ENCODE measurements at regions of chr6 and their contacts with region 1.

Region 1: GRCh38 chr6:112043032-112044007 is 10.6 kb upstream of the CCN6 start:
- DNase-seq: peak; percentile 82 to 93 (median 90)
- ATAC-seq: peak; percentile 95
- H3K4me3 ChIP-seq: peak overlapping the region; percentile 92
- H3K4me3 Mint-ChIP-seq: peak overlapping the region; percentile 92 to 99 (median 98)
- H3K27ac ChIP-seq: peak overlapping the region; percentile 91
- H3K27ac Mint-ChIP-seq: peak overlapping the region; percentile 96 to 100 (median 99)
- H3K4me1 ChIP-seq: peaks cover 5 to 24% of the 10 kb centered on the region in 2 donors
- H3K4me1 Mint-ChIP-seq: peaks cover 10 to 51% (median 35%) of the 10 kb centered on the region in 7 donors
- H3K27me3 ChIP-seq: no peaks in the 10 kb centered on the region
- H3K27me3 Mint-ChIP-seq: no peaks in the 10 kb centered on the region

Region 2: DNA sequence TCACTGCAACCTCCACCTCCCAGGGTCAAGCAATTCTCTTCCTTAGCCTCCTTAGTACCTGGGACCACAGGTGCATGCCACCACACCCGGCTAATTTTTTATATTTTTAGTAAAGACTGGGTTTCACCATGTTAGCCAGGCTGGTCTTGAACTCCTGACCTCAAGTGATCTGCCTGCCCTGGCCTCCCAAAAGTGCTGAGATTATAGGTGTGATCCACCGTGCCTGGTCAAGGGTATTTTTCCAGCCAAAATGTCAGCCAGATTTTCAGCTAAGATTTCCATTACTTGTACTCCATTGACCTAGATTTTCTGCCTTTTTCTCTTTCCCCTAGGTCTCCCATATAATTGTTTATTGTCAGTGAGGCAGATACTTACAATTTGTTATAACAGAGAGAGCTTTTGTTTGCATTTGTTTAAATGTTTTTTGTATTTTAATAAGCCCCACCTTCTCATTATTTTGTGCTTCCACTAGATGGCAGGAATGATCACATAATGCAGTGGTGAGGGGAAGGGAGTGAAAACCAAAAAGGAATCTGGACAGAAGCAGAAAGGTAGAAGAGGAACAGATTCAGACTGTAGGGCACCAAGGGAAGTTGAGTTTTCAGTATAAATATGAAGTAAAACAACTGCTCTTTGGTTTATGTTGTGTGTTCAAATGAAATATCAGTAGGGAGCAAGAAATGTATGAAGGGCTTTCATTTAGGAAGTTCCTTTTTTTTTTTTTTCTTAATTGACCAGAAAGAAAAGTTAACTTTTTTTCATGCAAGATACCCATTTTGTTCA is 1031.8 kb before region 1 on chr6:
- CTCF ChIA-PET with region 1: no interaction called
- POLR2A ChIA-PET with region 1: no interaction called
- intact Hi-C with region 1: loop called in 1 of 2 experiments (anchors 1 kb)
- DNase-seq: peak in 7 of 9 donors; percentile 18 to 58 (median 50)
- ATAC-seq: peak; percentile 71
- H3K4me3 ChIP-seq: no peak overlapping the region
- H3K4me3 Mint-ChIP-seq: no peak overlapping the region
- H3K27ac ChIP-seq: no peak overlapping the region
- H3K27ac Mint-ChIP-seq: peak overlapping the region in 1 of 9 donors; percentile 16
- H3K4me1 ChIP-seq: no peaks in the 10 kb centered on the region
- H3K4me1 Mint-ChIP-seq: peaks cover 3 to 13% (median 5%) of the 10 kb centered on the region in 7 donors
- H3K27me3 ChIP-seq: no peaks in the 10 kb centered on the region
- H3K27me3 Mint-ChIP-seq: no peaks in the 10 kb centered on the region

Region 3: DNA sequence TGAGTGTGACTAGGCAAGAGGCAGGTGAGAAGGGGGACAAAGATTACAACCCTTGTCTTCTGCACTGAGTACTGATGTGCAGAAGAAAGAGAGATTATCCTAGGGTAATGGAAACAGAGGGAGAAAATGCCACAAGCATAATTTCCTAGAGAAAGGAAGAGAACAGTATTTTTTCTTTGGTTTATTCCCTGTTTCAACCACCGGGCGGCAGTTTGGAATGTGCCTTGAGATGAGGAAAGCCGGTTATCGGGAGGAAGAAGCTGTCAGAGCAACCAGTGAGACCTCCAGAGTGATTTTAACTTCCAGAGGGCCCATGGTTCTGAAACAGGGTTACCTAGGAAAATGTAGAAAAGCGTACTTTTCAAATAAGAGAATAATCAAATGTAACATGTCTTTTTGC is 681.7 kb before region 1 on chr6:
- CTCF ChIA-PET with region 1: no interaction called
- POLR2A ChIA-PET with region 1: no interaction called
- intact Hi-C with region 1: loop called in 1 of 2 experiments (anchors 1 kb)
- DNase-seq: no peak
- ATAC-seq: no peak
- H3K4me3 ChIP-seq: no peak overlapping the region
- H3K4me3 Mint-ChIP-seq: no peak overlapping the region
- H3K27ac ChIP-seq: no peak overlapping the region
- H3K27ac Mint-ChIP-seq: no peak overlapping the region
- H3K4me1 ChIP-seq: no peaks in the 10 kb centered on the region
- H3K4me1 Mint-ChIP-seq: no peaks in the 10 kb centered on the region
- H3K27me3 ChIP-seq: no peaks in the 10 kb centered on the region
- H3K27me3 Mint-ChIP-seq: no peaks in the 10 kb centered on the region

Region 4: DNA sequence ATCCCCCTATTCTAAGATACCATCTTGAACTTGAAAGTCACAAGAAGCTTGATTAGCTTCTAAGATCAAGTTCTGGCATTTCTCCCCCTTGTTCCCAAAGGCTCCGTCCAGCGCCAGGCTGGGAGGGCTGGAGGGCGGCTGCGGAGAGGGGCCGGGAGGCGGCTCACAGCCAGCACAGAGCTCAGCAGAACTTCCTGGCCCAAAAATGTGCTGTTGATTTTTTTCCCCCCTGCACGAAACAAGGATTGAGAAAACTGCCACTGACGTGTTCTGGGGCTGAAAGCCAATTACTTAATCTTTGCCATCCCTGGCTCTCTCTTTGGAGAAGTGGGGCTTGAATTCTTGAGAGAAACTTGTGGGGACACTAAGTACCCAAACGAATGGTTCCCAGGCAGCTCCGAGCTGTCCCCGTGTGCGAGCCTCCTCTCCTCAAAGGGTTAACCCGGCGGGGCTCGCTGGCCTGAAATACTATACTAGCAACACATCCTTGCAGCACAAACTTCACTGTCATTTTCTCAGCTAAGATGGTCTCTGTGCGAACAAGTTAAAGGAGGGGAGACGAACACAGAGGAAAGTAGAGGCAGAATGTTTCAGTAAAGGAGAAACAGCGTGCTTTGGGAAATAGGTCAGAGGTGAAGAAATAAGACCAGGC is 438.1 kb before region 1 on chr6:
- CTCF ChIA-PET with region 1: no interaction called
- POLR2A ChIA-PET with region 1: interaction called, 3 read pairs
- intact Hi-C with region 1: loop called (anchors 1 kb)
- DNase-seq: peak in 8 of 9 donors; percentile 12 to 60 (median 34)
- ATAC-seq: peak; percentile 56
- H3K4me3 ChIP-seq: peak overlapping the region; percentile 85
- H3K4me3 Mint-ChIP-seq: peak overlapping the region; percentile 89 to 97 (median 94)
- H3K27ac ChIP-seq: peak overlapping the region; percentile 84
- H3K27ac Mint-ChIP-seq: peak overlapping the region; percentile 90 to 98 (median 95)
- H3K4me1 ChIP-seq: peaks cover 13 to 15% of the 10 kb centered on the region in 2 donors
- H3K4me1 Mint-ChIP-seq: peaks cover 25 to 61% (median 58%) of the 10 kb centered on the region in 7 donors
- H3K27me3 ChIP-seq: no peaks in the 10 kb centered on the region
- H3K27me3 Mint-ChIP-seq: peaks cover 0 to 2% (median 0%) of the 10 kb centered on the region in 5 donors

Region 5: DNA sequence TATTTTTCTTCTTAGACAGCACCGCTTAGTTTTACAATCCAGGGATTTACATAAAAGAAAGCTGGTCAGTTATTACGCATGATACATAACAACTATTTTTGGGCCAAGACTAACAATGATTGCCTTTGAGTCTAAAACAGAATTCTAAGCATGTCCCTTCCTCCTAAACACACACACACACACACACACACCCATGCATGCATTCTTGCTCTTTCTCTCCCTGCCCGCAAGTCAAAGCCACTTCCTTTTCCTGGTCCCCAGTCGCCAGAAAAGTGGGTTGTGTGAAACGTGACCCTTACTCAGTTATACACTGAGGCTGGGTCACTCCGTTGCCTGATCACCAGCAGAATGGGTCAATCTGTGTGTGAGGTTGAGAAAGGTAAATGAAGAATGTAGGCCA is 201.5 kb before region 1 on chr6:
- CTCF ChIA-PET with region 1: interaction called, 3 read pairs
- POLR2A ChIA-PET with region 1: interaction called, 4 read pairs
- intact Hi-C with region 1: loop called (anchors 1 kb)
- DNase-seq: peak in 7 of 9 donors; percentile 38 to 63 (median 61)
- ATAC-seq: no peak
- H3K4me3 ChIP-seq: no peak overlapping the region
- H3K4me3 Mint-ChIP-seq: no peak overlapping the region
- H3K27ac ChIP-seq: peak overlapping the region; percentile 62
- H3K27ac Mint-ChIP-seq: no peak overlapping the region
- H3K4me1 ChIP-seq: peaks cover 98 to 100% of the 10 kb centered on the region in 2 donors
- H3K4me1 Mint-ChIP-seq: peaks cover 0 to 55% (median 0%) of the 10 kb centered on the region in 7 donors
- H3K27me3 ChIP-seq: no peaks in the 10 kb centered on the region
- H3K27me3 Mint-ChIP-seq: no peaks in the 10 kb centered on the region

Region 6: DNA sequence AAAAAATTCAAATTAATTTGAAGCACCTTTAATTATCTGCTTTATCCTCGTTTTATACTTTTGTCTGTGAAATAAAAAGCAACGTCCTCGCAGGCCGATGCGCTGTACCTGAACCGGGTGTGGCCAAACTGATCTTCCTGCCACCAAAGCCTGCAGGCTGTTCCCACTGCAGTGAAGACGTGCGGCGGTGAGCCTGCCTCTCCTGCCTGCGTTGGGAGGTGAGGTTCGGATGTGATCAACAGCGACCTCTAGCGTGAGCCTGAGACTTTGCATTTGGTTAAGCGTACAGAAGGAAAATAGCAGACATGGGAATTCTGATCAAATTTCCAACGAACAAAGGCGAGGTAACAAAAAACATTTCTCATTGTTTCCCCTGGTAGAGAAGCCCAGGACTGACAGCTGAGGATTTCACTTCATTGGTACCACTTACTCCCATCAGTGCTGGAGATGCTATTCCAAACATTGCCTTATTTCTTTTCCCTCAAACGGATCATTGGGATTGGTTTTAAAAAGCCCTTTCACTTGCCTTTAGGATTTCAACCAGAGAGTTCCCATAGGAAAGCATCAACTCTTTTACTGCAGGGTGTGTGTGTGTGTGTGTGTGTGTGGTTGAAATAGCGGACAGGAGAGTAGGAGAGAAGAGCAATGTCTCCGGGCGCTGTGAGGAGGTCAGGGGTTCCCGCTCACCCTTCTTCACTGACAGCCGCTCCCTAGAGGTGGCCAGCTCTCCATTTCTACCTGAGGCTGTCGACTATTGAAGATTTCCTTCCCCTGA is 46.1 kb before region 1 on chr6:
- CTCF ChIA-PET with region 1: interaction called, 25 read pairs
- POLR2A ChIA-PET with region 1: interaction called, 4 read pairs
- intact Hi-C with region 1: loop called (anchors 1 kb)
- DNase-seq: peak; percentile 60 to 82 (median 75)
- ATAC-seq: peak; percentile 89
- H3K4me3 ChIP-seq: peak overlapping the region; percentile 2
- H3K4me3 Mint-ChIP-seq: peak overlapping the region; percentile 58 to 91 (median 83)
- H3K27ac ChIP-seq: peak overlapping the region; percentile 55
- H3K27ac Mint-ChIP-seq: peak overlapping the region; percentile 44 to 97 (median 93)
- H3K4me1 ChIP-seq: peaks cover 19 to 45% of the 10 kb centered on the region in 2 donors
- H3K4me1 Mint-ChIP-seq: peaks cover 35 to 63% (median 50%) of the 10 kb centered on the region in 7 donors
- H3K27me3 ChIP-seq: no peaks in the 10 kb centered on the region
- H3K27me3 Mint-ChIP-seq: no peaks in the 10 kb centered on the region

Region 7: GRCh38 chr6:112029045-112029822 is 14.1 kb before region 1 on chr6:
- CTCF ChIA-PET with region 1: interaction called, 82 read pairs
- POLR2A ChIA-PET with region 1: interaction called, 106 read pairs
- intact Hi-C with region 1: loop called (anchors 1 kb)
- DNase-seq: peak in 7 of 9 donors; percentile 22 to 58 (median 43)
- ATAC-seq: no peak
- H3K4me3 ChIP-seq: no peak overlapping the region
- H3K4me3 Mint-ChIP-seq: peak overlapping the region; percentile 49 to 83 (median 68)
- H3K27ac ChIP-seq: peak overlapping the region; percentile 90
- H3K27ac Mint-ChIP-seq: peak overlapping the region; percentile 95 to 100 (median 98)
- H3K4me1 ChIP-seq: peaks cover 34 to 74% of the 10 kb centered on the region in 2 donors
- H3K4me1 Mint-ChIP-seq: peaks cover 46 to 94% (median 84%) of the 10 kb centered on the region in 7 donors
- H3K27me3 ChIP-seq: no peaks in the 10 kb centered on the region
- H3K27me3 Mint-ChIP-seq: peaks cover 0 to 3% (median 0%) of the 10 kb centered on the region in 5 donors

Region 8: GRCh38 chr6:112173221-112173804 is 130.0 kb after region 1 on chr6:
- CTCF ChIA-PET with region 1: no interaction called
- POLR2A ChIA-PET with region 1: no interaction called
- intact Hi-C with region 1: no loop called
- DNase-seq: no peak
- ATAC-seq: no peak
- H3K4me3 ChIP-seq: no peak overlapping the region
- H3K4me3 Mint-ChIP-seq: no peak overlapping the region
- H3K27ac ChIP-seq: no peak overlapping the region
- H3K27ac Mint-ChIP-seq: no peak overlapping the region
- H3K4me1 ChIP-seq: no peaks in the 10 kb centered on the region
- H3K4me1 Mint-ChIP-seq: no peaks in the 10 kb centered on the region
- H3K27me3 ChIP-seq: no peaks in the 10 kb centered on the region
- H3K27me3 Mint-ChIP-seq: peaks cover 17 to 58% (median 25%) of the 10 kb centered on the region in 5 donors

Measured in naive thymus-derived CD4-positive, alpha-beta T cell (primary cell).